ENCODE measurements at regions of chr2 and their contacts with region 1.

Region 1: GRCh38 chr2:264660-265468 is at the start of gene ACP1:
- DNase-seq: peak; percentile 74 to 95
- H3K4me3 ChIP-seq: peak within 1 kb of the TSS; percentile 73 to 86
- H3K27ac ChIP-seq: peak within 1 kb of the TSS; percentile 56 to 71
- H3K4me1 ChIP-seq: peaks cover 5 to 11% of the 10 kb centered on the region in 2 donors
- H3K27me3 ChIP-seq: no peaks in the 10 kb centered on the region
- CTCF ChIP-seq: no peak
- total RNA-seq, gene ACP1: 30.8 TPM

Region 2: GRCh38 chr2:46471-47345 is 218.2 kb before region 1 on chr2 and contains the start of gene FAM110C:
- intact Hi-C with region 1: loop called (anchors 1 kb)
- DNase-seq: peak; percentile 23 to 89
- H3K4me3 ChIP-seq: peak within 1 kb of the TSS; percentile 82 to 97
- H3K27ac ChIP-seq: peak within 1 kb of the TSS; percentile 86 to 91
- H3K4me1 ChIP-seq: peaks cover 3 to 8% of the 10 kb centered on the region in 2 donors
- H3K27me3 ChIP-seq: no peaks in the 10 kb centered on the region
- CTCF ChIP-seq: no peak
- total RNA-seq, gene FAM110C: 0.43 TPM

Measured in ascending aorta (tissue), 2 donors.